ENCODE measurements at regions of chr2 and their contacts with region 1.

Region 1: DNA sequence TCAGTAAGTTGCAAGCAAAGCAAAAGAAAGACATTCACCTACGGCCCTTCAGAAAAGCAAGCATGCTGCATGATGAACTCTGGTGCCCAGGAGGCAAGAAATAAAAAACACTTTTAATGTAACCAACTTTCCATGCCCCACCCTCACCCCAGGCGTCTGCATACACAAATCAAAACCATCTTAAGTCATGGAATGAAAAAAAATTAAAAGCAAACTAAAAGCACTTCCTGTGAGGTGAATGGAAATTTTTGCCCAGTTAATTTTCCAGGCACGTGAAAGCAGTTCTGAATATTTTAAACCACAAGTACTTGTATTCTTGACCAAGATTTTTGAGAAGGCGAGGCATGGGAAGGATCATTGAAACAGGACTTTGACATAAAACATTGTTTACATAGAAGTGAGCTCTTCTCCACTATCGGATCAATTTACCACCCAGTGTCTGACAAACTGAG is 2.5 kb upstream of the ICOS start:
- DNase-seq: peak in 2 of 5 donors; percentile 30 to 43
- H3K4me3 ChIP-seq: peak overlapping the region; percentile 35
- H3K4me3 Mint-ChIP-seq: peak overlapping the region; percentile 62 to 79 (median 67)
- H3K27ac ChIP-seq: no peak overlapping the region
- H3K27ac Mint-ChIP-seq: peak overlapping the region; percentile 86 to 98 (median 94)
- H3K4me1 ChIP-seq: peaks cover 44% of the 10 kb centered on the region
- H3K4me1 Mint-ChIP-seq: peaks cover 46 to 72% (median 59%) of the 10 kb centered on the region in 3 donors
- H3K27me3 ChIP-seq: no peaks in the 10 kb centered on the region
- H3K27me3 Mint-ChIP-seq: no peaks in the 10 kb centered on the region

Region 2: GRCh38 chr2:203949228-203949627 is 15.2 kb after region 1 on chr2:
- CTCF ChIA-PET with region 1: interaction called, 6 read pairs
- POLR2A ChIA-PET with region 1: interaction called, 12 read pairs
- DNase-seq: peak in 2 of 5 donors; percentile 29 to 49
- H3K4me3 ChIP-seq: no peak overlapping the region
- H3K4me3 Mint-ChIP-seq: peak overlapping the region; percentile 2 to 65 (median 57)
- H3K27ac ChIP-seq: no peak overlapping the region
- H3K27ac Mint-ChIP-seq: peak overlapping the region; percentile 3 to 94 (median 90)
- H3K4me1 ChIP-seq: peaks cover 75% of the 10 kb centered on the region
- H3K4me1 Mint-ChIP-seq: peaks cover 80 to 96% (median 92%) of the 10 kb centered on the region in 3 donors
- H3K27me3 ChIP-seq: no peaks in the 10 kb centered on the region
- H3K27me3 Mint-ChIP-seq: no peaks in the 10 kb centered on the region